Ascending aorta (tissue), 2 donors: ENCODE measurements at regions of chr4 and their contacts with region 1.

Region 1: GRCh38 chr4:48830706-48831531 is at the start of gene OCIAD1:
- DNase-seq: peak; percentile 96 to 99
- H3K4me3 ChIP-seq: peak within 1 kb of the TSS; percentile 83 to 89
- H3K27ac ChIP-seq: peak within 1 kb of the TSS; percentile 81 to 94
- H3K4me1 ChIP-seq: peaks cover 0 to 11% of the 10 kb centered on the region in 2 donors
- H3K27me3 ChIP-seq: no peaks in the 10 kb centered on the region
- CTCF ChIP-seq: no peak
- total RNA-seq, gene OCIAD1: 146 TPM

Region 2: DNA sequence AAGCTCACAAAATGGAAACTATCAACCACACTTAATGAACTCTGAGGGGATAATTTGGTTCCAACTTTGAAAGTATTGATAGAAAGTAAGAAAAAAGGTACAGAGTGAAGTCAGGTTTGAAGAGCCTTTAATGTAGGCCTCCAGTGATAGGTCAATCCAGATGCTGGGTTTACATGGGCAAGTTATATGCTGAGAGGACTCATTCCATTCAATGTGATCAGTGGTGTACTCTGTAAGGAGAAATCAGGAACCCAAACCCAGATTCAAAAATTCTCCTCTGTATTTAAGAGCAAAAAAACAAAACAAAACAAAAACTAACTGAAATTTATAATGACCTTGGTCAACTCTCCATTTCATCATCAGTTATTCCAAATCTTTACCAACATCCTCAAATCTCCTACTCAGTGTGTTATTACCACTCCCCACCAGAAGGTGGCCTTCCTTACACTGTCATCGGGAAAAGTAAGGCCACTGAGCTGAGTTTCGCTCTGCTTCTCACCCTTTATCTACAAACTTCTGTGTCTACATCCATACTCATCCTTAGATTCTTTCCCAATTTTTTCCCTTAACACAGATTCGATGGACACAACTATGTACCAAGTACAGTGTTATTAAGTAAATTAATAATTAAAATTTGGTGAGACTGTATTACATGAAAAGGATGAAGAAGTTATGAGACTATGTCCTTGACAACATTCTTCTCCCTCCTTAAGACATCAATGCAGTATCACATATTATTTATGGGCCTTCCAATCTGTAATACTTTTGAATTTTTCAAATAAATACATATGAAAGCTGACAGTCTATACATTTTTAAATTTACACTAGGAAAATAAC is 252.6 kb before region 1 on chr4:
- intact Hi-C with region 1: loop called (anchors 5 kb)
- DNase-seq: peak in 1 of 2 donors; percentile 77
- H3K4me3 ChIP-seq: no peak overlapping the region
- H3K27ac ChIP-seq: no peak overlapping the region
- H3K4me1 ChIP-seq: no peaks in the 10 kb centered on the region
- H3K27me3 ChIP-seq: no peaks in the 10 kb centered on the region
- CTCF ChIP-seq: peak; percentile 70 to 87 (median 70)

Region 3: GRCh38 chr4:48801734-48802133 is 29.2 kb before region 1 on chr4:
- intact Hi-C with region 1: loop called (anchors 1 kb)
- DNase-seq: peak in 1 of 2 donors; percentile 75
- H3K4me3 ChIP-seq: peak overlapping the region in 1 of 2 donors; percentile 29
- H3K27ac ChIP-seq: peak overlapping the region; percentile 77 to 80
- H3K4me1 ChIP-seq: peaks cover 9 to 51% of the 10 kb centered on the region in 2 donors
- H3K27me3 ChIP-seq: no peaks in the 10 kb centered on the region
- CTCF ChIP-seq: no peak